Stomach (tissue), 19 donors: ENCODE measurements at regions of chr12 and their contacts with region 1.

Region 1: GRCh38 chr12:25384038-25384892 is 133.5 kb upstream of the KRAS start:
- DNase-seq: peak in 1 of 2 donors; percentile 57
- H3K4me3 ChIP-seq: peak overlapping the region; percentile 51 to 66 (median 59)
- H3K27ac ChIP-seq: peak overlapping the region; percentile 23 to 100 (median 99)
- H3K4me1 ChIP-seq: peaks cover 8 to 17% (median 15%) of the 10 kb centered on the region in 4 donors
- H3K27me3 ChIP-seq: no peaks in the 10 kb centered on the region
- CTCF ChIP-seq: no peak
- EP300 ChIP-seq: no peak
- POLR2A ChIP-seq: no peak

Region 2: GRCh38 chr12:25250744-25251730 is 133.2 kb before region 1 on chr12 and contains the start of gene KRAS:
- intact Hi-C with region 1: loop called (anchors 5 kb)
- DNase-seq: peak; percentile 96 to 99
- H3K4me3 ChIP-seq: peak within 1 kb of the TSS; percentile 74 to 100 (median 86)
- H3K27ac ChIP-seq: peak within 1 kb of the TSS; percentile 96 to 100 (median 98)
- H3K4me1 ChIP-seq: peaks cover 7 to 69% (median 46%) of the 10 kb centered on the region in 4 donors
- H3K27me3 ChIP-seq: no peaks in the 10 kb centered on the region
- CTCF ChIP-seq: no peak
- EP300 ChIP-seq: no peak
- POLR2A ChIP-seq: peak in 1 of 4 donors; percentile 10
- total RNA-seq, gene KRAS: 13.0 to 75.3 (median 19.2) TPM